ENCODE measurements at regions of chr3 and their contacts with region 1.

Region 1: GRCh38 chr3:52056968-52057805 is 816 bp upstream of the DUSP7 start:
- DNase-seq: peak; percentile 99
- ATAC-seq: peak; percentile 77
- H3K4me3 Mint-ChIP-seq: peak overlapping the region; percentile 83
- H3K27ac Mint-ChIP-seq: peak overlapping the region; percentile 94
- H3K4me1 Mint-ChIP-seq: peaks cover 30% of the 10 kb centered on the region
- H3K27me3 Mint-ChIP-seq: peaks cover 21% of the 10 kb centered on the region
- CTCF ChIP-seq: no peak

Region 2: DNA sequence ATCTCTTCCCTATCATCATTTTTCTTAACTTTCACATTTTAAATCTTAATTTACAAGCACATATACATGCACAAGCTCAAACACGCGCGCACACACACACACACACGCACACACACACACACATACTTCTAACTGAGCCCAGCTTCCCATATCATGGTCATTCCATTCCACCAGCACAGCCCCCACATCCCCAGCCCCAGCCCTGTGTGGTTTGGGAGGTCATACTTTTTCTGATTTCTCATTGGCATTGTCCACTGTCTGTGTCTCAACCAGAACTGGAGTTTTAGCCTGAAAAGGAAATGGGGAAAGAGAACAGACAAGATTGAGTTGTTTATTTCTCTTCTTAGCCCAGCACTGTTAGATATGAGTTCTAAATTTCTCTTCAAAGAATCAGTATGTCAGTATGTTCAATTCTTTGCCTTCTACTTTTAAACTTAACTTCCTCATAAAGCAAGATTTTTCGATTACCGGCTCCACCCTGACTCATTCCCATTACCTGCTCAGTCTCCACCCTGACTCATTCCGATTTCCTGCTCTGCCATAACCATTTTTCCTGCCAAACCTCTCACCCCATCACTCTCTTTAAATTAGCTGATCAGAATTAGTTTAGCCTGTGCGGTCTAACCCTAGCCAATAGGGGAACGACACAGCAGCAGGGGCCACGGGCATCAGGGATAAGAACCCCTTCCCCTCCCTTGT is 160.4 kb before region 1 on chr3:
- CTCF ChIA-PET with region 1: no interaction called
- POLR2A ChIA-PET with region 1: no interaction called
- DNase-seq: no peak
- ATAC-seq: no peak
- H3K4me3 Mint-ChIP-seq: no peak overlapping the region
- H3K27ac Mint-ChIP-seq: no peak overlapping the region
- H3K4me1 Mint-ChIP-seq: peaks cover 14% of the 10 kb centered on the region
- H3K27me3 Mint-ChIP-seq: peaks cover 5% of the 10 kb centered on the region
- CTCF ChIP-seq: no peak

Region 3: GRCh38 chr3:51941798-51942602 is 115.2 kb before region 1 on chr3 and contains the starts of genes PARP3 and RRP9:
- CTCF ChIA-PET with region 1: interaction called, 14 read pairs
- POLR2A ChIA-PET with region 1: no interaction called
- DNase-seq: peak; percentile 100
- ATAC-seq: peak; percentile 96
- H3K4me3 Mint-ChIP-seq: peak within 1 kb of the TSS; percentile 91
- H3K27ac Mint-ChIP-seq: no peak within 1 kb of the TSS
- H3K4me1 Mint-ChIP-seq: peaks cover 17% of the 10 kb centered on the region
- H3K27me3 Mint-ChIP-seq: no peaks in the 10 kb centered on the region; the same call in 1 of the 2 replicates
- CTCF ChIP-seq: peak; percentile 99
- total RNA-seq, gene PARP3: 2.8 to 2.9 TPM (median 2.8 TPM) in 3 replicates
- total RNA-seq, gene RRP9: 47.0 to 49.9 TPM (median 49.4 TPM) in 3 replicates

Region 4: DNA sequence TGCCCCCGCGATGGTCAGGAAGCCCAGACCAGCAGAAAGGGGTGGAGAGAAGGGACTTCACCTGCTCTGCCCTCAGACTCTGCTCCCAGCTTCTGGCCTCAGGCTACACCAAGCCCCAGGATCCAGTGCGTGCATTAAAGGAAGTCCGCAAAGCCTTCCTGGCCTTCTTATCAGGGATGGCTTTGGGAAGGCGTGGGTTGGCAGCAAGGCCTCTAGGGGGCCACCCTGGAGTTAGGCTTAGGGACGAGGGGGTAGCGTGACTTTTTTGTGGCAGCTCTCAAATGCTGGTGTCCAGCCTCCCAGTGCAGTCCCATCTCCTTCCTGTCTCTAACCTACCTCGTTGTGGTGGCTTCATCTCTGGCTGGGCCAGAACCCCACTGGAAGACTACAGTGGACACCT is 42.6 kb before region 1 on chr3:
- CTCF ChIA-PET with region 1: interaction called, 138 read pairs
- POLR2A ChIA-PET with region 1: no interaction called
- DNase-seq: peak; percentile 66
- ATAC-seq: peak; percentile 92
- H3K4me3 Mint-ChIP-seq: no peak overlapping the region
- H3K27ac Mint-ChIP-seq: 0 out of 2 replicates have a peak overlapping the region, but pooled peaks have one; percentile 15
- H3K4me1 Mint-ChIP-seq: peaks cover 5% of the 10 kb centered on the region; the same call in 1 of the 2 replicates
- H3K27me3 Mint-ChIP-seq: no peaks in the 10 kb centered on the region; the same call in 1 of the 2 replicates
- CTCF ChIP-seq: no peak

Region 5: GRCh38 chr3:52068055-52068571 is 10.9 kb after region 1 on chr3:
- CTCF ChIA-PET with region 1: interaction called, 13 read pairs
- POLR2A ChIA-PET with region 1: interaction called, 3 read pairs
- DNase-seq: no peak
- ATAC-seq: no peak
- H3K4me3 Mint-ChIP-seq: no peak overlapping the region
- H3K27ac Mint-ChIP-seq: no peak overlapping the region
- H3K4me1 Mint-ChIP-seq: no peaks in the 10 kb centered on the region
- H3K27me3 Mint-ChIP-seq: no peaks in the 10 kb centered on the region
- CTCF ChIP-seq: no peak

Region 6: GRCh38 chr3:52108302-52109232 is 51.4 kb after region 1 on chr3:
- CTCF ChIA-PET with region 1: interaction called, 16 read pairs
- POLR2A ChIA-PET with region 1: no interaction called
- DNase-seq: peak; percentile 30
- ATAC-seq: peak; percentile 80
- H3K4me3 Mint-ChIP-seq: no peak overlapping the region
- H3K27ac Mint-ChIP-seq: peak overlapping the region; percentile 30; the same call in 1 of the 2 replicates
- H3K4me1 Mint-ChIP-seq: peaks cover 3% of the 10 kb centered on the region; the same call in 1 of the 2 replicates
- H3K27me3 Mint-ChIP-seq: no peaks in the 10 kb centered on the region
- CTCF ChIP-seq: no peak

Region 7: DNA sequence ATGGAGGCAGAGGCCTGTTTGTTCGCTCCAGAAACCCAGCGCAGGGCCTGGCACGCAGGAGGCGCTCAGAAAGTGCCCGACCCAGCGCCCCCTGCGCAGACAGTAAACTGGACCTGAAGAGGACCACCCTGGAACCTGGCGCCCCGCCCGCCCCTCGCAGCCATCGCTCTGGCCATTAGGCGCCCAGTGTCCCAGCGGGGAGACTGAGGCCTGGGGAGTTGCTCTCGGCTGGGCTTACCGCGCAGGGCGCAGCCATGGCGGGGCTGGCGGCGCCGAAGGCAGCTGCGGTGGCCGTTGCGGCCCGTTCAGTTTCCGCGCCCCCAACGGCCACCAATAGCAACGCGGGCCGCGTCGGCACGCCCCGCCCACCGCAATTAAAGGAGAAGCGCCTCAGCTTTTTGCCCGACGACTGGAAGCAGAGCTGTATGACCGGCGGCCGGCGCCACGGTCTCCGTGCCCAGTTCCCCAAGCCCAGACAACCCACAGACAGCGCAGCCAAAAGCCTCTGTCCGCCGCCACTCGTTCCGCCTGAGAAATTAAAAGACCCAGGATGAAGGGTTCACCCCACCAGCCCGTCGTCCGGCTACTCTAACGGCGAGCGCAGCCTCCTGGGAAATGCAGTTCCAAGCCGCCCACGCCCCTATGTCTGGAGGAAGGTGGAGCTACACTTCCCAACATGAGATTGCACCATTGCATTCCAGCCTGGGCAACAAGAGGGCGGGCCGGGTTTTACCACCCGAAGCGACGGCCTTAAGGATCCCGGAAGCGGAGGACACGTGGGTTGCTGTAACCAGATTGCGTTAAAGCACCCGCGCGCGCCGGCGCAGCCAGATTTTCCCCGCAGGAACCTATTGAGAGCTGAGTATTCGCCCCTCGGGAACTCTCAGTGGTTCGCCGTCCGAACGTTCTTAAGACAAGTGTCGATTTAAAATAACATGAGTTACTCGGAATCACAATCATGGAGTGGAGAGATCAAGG is 97.2 kb after region 1 on chr3 and contains the start of gene POC1A:
- CTCF ChIA-PET with region 1: interaction called, 18 read pairs
- POLR2A ChIA-PET with region 1: interaction called, 10 read pairs
- DNase-seq: peak; percentile 92
- ATAC-seq: peak; percentile 92
- H3K4me3 Mint-ChIP-seq: peak within 1 kb of the TSS; percentile 91
- H3K27ac Mint-ChIP-seq: peak within 1 kb of the TSS; percentile 96
- H3K4me1 Mint-ChIP-seq: peaks cover 33% of the 10 kb centered on the region
- H3K27me3 Mint-ChIP-seq: no peaks in the 10 kb centered on the region
- CTCF ChIP-seq: no peak; the same call in 1 of the 2 replicates
- total RNA-seq, gene POC1A: 31.3 to 36.2 TPM (median 34.9 TPM) in 3 replicates

Region 8: DNA sequence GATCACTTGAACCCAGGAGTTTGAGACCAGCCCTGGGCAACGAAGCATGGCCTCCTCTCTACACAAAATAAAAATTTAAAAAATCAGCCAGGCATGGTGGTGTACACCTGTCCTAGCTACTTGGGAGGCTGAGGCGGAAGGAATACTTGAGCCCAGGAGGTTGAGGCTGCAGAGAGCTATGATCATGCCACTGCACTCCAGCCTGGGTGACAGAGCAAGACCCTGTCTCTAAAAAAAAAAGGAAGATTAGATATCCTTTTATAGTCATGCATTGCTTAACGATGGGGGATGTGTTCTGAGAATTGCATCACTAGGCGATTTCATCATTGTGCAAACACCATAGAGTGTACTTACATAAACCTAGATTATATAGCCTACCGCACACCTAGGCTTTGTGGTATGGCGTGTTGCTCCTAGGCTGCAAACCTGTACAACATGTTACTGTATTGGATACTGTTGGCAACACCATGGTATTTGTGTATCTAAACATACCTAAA is 153.4 kb after region 1 on chr3:
- CTCF ChIA-PET with region 1: no interaction called
- POLR2A ChIA-PET with region 1: no interaction called
- DNase-seq: no peak
- ATAC-seq: no peak
- H3K4me3 Mint-ChIP-seq: no peak overlapping the region
- H3K27ac Mint-ChIP-seq: no peak overlapping the region
- H3K4me1 Mint-ChIP-seq: no peaks in the 10 kb centered on the region
- H3K27me3 Mint-ChIP-seq: no peaks in the 10 kb centered on the region
- CTCF ChIP-seq: no peak

Region 9: DNA sequence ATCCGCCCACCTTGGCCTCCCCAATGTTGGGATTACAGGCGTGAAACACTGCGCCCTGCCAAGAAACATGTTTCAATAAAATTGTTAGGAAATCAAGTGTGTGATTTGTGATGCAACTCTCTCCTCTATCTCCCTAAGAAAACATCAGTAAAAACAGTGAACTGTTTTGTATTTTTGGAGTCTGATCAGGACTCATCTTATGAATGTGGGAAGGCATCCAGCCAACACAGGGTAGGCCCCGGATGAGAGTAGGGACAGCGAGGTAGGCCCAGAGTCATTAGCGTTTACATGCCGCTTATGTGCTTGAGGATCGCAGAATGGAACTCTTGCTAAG is 229.6 kb after region 1 on chr3:
- CTCF ChIA-PET with region 1: no interaction called
- POLR2A ChIA-PET with region 1: no interaction called
- DNase-seq: peak; percentile 7
- ATAC-seq: no peak
- H3K4me3 Mint-ChIP-seq: peak overlapping the region; percentile 88
- H3K27ac Mint-ChIP-seq: peak overlapping the region; percentile 100
- H3K4me1 Mint-ChIP-seq: peaks cover 5% of the 10 kb centered on the region
- H3K27me3 Mint-ChIP-seq: no peaks in the 10 kb centered on the region
- CTCF ChIP-seq: no peak

Measured in WTC11 (cell line).